GM23248 (cell line): ENCODE measurements at regions of chr2 and their contacts with region 1.

Region 1: DNA sequence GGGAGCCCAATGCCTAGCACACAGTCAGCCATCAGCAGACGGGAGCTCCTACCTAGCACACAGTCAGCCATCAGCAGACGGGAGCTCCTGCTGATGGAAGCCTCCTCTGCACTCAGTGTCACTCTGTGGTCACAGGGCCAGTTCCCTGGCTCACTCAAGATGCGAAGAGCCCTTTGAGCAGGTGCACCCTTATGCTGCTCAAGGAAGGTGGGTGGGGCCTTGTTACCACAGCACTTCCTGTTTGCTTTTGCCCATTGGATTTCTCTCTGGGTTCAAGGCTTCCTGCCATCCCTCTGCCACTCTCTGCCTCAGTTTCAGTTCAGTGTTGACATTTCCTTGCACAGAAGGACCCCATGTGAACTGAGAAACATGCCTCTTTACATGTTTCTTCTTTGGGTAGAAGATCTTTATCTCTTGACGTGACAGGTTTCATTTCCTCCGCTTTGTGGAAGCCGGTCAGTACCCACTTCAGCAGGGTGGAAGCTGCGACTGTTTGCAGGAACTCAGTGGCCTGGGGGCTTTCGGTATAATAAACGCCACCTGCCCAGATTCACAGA is 11.6 kb downstream of the TRIB2 start:
- DNase-seq: no peak
- H3K4me3 ChIP-seq: no peak overlapping the region
- H3K27ac ChIP-seq: no peak overlapping the region
- H3K4me1 ChIP-seq: no peaks in the 10 kb centered on the region
- H3K27me3 ChIP-seq: no peaks in the 10 kb centered on the region

Region 2: DNA sequence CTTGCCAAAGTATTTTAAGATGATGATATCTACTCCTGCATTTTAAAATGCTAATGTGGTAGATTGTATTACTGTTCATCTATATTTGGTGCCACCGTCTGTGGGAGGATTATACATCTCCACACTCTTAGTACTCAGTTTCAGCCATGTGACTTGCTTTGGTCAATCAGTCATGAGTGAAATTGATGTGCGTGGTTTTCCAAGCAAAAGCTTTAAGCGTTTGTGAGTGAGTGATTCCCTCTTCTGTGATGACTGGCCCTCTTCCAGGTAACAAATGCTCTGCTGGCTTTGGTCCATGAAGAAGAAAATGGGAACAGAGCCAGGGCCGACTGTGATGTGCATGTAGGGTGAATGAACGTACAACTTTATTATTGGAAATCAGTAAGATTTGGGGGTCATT is 651.5 kb before region 1 on chr2:
- in situ Hi-C with region 1: no loop called
- DNase-seq: no peak
- H3K4me3 ChIP-seq: no peak overlapping the region
- H3K27ac ChIP-seq: no peak overlapping the region
- H3K4me1 ChIP-seq: no peaks in the 10 kb centered on the region
- H3K27me3 ChIP-seq: no peaks in the 10 kb centered on the region; the same call in 1 of the 2 replicates

Region 3: DNA sequence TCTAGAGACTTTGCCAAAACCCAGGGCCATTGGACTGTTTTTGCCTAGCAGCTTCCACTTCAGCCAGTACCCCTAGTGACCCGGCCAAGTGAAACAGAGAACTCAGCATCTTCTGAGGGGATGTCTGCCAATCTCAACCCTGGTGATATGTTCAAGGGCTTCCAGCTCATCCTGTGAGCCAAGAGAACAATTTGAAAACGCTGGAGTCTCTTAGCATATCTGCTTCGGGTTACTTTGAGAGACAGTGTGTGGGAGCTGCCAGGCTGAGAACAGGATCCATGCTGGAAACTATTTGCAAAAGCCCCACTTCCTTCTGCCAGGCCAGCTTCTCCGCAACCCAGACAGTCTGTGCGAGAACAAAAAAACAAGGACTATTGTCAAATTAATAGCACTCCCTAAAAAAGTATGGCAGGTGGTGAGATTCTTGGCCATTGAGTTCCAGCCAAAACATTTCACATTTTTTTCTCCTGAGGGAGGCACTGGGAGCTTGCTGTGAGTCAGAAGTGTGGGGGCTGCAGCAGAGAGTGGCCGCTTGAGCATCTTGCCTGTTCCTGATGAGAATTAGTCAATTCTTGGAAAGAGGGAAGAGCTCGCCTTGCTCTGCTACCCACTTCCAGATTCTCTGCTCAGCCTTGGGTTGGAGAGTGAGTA is 407.2 kb before region 1 on chr2:
- in situ Hi-C with region 1: no loop called
- DNase-seq: peak; percentile 96
- H3K4me3 ChIP-seq: peak overlapping the region; percentile 15
- H3K27ac ChIP-seq: peak overlapping the region; percentile 66
- H3K4me1 ChIP-seq: peaks cover 51% of the 10 kb centered on the region
- H3K27me3 ChIP-seq: no peaks in the 10 kb centered on the region

Region 4: DNA sequence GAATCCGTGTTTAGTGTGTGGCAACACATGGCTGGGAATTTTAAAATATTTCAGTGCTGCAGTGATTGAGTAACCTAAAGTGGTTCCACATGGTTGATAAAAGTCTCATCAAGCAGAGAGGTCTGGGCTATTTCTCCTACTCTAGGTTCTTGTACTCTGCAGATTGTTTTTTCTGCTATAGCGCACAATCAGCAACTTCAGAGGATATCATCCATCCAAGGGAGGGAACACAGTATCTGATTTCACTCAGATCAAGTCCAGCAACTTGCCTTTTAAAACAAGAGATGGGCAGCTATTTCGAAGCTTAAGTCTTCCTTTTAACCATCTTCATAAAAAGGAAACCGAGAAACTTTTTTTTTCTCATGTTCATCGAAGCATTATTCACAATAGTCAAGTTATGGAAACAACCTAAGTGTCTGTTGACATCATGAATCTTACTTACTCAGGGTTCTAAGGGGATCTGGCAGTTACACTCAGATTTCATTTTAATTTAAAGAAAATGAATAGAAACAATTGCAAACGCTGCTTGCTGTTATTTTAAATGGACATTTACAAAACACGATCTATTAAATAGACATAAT is 184.2 kb before region 1 on chr2:
- in situ Hi-C with region 1: no loop called
- DNase-seq: peak; percentile 72
- H3K4me3 ChIP-seq: peak overlapping the region; percentile 25; the same call in 1 of the 2 replicates
- H3K27ac ChIP-seq: no peak overlapping the region
- H3K4me1 ChIP-seq: peaks cover 14% of the 10 kb centered on the region
- H3K27me3 ChIP-seq: no peaks in the 10 kb centered on the region

Region 5: GRCh38 chr2:12928197-12928774 is 200.0 kb after region 1 on chr2:
- in situ Hi-C with region 1: loop called (anchors 10 kb)
- DNase-seq: peak; percentile 91
- H3K4me3 ChIP-seq: peak overlapping the region; percentile 51
- H3K27ac ChIP-seq: peak overlapping the region; percentile 44
- H3K4me1 ChIP-seq: peaks cover 30% of the 10 kb centered on the region
- H3K27me3 ChIP-seq: no peaks in the 10 kb centered on the region

Region 6: GRCh38 chr2:13745330-13745729 is 1017.0 kb after region 1 on chr2:
- in situ Hi-C with region 1: no loop called
- DNase-seq: no peak
- H3K4me3 ChIP-seq: no peak overlapping the region
- H3K27ac ChIP-seq: no peak overlapping the region
- H3K4me1 ChIP-seq: no peaks in the 10 kb centered on the region
- H3K27me3 ChIP-seq: no peaks in the 10 kb centered on the region